Right lobe of liver (tissue), 6 donors: ENCODE measurements at regions of chr19 and their contacts with region 1.

Region 1: DNA sequence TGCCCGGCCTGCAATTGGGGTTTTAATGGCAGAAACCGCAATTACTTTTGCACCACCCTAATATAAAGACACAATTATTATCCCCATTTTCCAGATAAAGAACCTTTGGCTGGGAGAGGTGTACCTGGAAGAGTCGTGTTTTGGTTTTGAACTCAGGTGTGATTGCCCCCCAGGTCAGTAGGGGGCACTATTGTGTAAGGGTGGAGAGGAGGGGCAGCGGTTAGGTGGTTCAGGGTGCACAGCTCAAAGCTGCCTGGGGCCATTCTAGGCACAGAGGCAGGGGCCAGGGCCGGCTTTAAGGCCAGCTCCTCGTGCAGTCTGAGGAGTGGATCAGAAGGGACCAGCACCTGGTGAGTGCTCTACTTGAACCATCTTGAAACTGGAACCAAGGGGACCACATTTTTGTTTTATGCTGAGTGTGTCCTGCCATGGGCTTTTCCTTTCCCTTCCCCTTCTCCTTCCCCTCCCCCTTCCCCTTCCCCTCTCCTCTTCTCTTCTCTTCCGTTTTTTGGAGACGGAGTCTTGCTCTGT is 5.8 kb upstream of the FCGRT start:
- DNase-seq: peak in 2 of 3 donors; percentile 56 to 73
- ATAC-seq: peak; percentile 83 to 93 (median 87)
- H3K4me3 ChIP-seq: no peak overlapping the region
- H3K27ac ChIP-seq: no peak overlapping the region
- H3K4me1 ChIP-seq: no peaks in the 10 kb centered on the region
- H3K27me3 ChIP-seq: no peaks in the 10 kb centered on the region
- CTCF ChIP-seq: peak; percentile 70 to 81 (median 72)
- POLR2A ChIP-seq: no peak

Region 2: GRCh38 chr19:49443366-49444099 is 63.1 kb before region 1 on chr19:
- intact Hi-C with region 1: no loop called
- DNase-seq: peak; percentile 94
- ATAC-seq: peak; percentile 79 to 93 (median 88)
- H3K4me3 ChIP-seq: peak overlapping the region; percentile 70 to 80 (median 76)
- H3K27ac ChIP-seq: peak overlapping the region; percentile 2 to 40 (median 35)
- H3K4me1 ChIP-seq: no peaks in the 10 kb centered on the region
- H3K27me3 ChIP-seq: no peaks in the 10 kb centered on the region
- CTCF ChIP-seq: peak; percentile 73 to 83 (median 77)
- POLR2A ChIP-seq: peak; percentile 13

Region 3: GRCh38 chr19:49544154-49544553 is 37.5 kb after region 1 on chr19:
- intact Hi-C with region 1: loop called in 1 of 2 experiments (anchors 5 kb)
- DNase-seq: no peak
- ATAC-seq: no peak
- H3K4me3 ChIP-seq: no peak overlapping the region
- H3K27ac ChIP-seq: no peak overlapping the region
- H3K4me1 ChIP-seq: no peaks in the 10 kb centered on the region
- H3K27me3 ChIP-seq: no peaks in the 10 kb centered on the region
- CTCF ChIP-seq: no peak
- POLR2A ChIP-seq: no peak